GM10248 (cell line): ENCODE measurements at regions of chr12 and their contacts with region 1.

Region 1: GRCh38 chr12:4857472-4858291 is 52.0 kb upstream of the KCNA1 start:
- DNase-seq: peak; percentile 79
- CTCF ChIP-seq: peak; percentile 94

Region 2: DNA sequence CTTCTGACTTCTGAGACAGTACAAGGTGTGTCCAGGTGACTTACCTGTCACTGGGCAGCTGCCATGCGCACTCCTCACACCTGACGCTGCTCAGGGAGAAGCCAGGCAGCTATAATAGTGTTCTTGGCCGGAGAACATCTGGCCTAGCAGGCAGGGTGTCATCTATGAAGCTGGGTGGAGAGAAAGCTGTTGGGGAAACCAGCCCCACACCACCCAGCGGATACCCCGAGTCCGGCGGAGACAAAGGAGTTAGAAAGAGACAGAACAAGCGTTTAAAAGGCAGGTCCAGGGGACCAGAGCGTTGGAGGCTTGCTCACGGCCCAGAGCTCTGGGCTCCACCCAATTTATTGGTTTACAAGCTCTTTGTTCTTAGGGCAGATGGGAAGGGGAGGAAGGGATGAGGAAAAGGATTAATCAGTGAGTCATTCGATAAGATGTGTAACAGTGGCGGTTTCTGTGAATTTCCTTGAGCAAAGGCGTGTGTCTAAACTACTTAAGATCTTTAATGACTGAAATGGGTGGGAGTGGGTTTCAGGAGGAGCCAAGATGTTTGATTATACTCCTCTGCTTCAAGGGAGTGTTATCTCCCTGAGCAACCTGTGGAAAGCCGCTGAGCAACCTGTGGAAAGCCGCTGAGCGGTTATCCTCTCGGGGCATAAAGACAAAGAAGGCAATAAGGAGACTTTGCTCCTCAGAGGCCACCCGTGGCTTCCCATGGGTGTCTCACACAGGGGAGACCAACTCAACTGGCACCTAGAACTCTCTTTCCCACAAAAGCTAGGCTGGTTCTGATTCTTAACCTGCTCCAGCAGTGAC is 137.7 kb before region 1 on chr12 and contains the start of gene GALNT8:
- CTCF ChIA-PET with region 1: no interaction called
- POLR2A ChIA-PET with region 1: no interaction called
- DNase-seq: no peak
- CTCF ChIP-seq: no peak

Region 3: DNA sequence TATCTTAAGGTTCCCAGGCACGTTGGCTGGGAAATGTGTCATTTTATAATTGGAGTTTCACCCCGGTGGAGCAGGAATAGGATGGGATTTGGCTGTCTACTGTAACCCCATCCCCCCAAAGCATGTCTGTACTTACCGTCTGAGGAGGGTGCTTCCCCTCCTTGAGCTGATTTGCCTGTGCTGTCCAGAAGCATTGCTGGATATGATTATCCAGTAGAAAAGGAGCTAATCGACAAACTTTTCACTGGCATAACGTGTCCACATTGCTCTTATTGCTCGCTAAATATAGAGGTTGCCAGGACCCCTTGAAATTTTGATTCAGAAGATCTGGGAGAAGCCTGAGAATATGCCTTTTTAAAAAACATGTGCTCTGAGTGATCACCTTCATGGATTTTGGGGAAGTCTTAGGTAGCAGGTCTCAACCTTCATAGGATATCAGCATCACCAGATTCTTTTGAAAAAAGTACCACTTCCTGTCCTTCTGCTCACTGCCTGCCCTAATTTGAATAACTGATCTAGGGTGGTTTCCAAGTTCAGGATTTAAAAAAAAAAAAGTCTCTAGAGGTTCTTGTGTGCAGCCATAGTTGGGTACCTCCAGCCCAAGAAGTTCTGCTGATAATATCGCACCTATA is 28.4 kb before region 1 on chr12:
- CTCF ChIA-PET with region 1: interaction called, 45 read pairs
- POLR2A ChIA-PET with region 1: no interaction called
- DNase-seq: peak; percentile 76
- CTCF ChIP-seq: no peak

Region 4: DNA sequence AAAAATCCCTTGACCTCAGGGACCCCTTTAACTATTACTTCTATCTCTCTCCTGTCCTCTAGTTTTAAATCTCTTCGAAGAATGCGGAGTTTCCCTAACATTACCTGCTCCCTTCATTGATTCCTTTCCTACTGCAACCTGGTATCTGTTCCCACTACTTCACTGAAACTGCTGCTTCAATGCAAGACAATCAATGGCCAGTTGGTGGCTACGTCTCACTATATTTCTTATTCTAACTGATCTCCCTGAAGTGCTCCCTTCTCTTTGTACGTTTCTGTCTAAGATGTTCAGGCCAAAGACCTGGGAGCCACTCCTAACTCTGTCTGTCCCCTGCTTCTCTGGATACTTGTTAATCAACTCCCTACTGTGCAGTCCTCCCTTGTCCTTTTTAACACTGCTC is 41.7 kb after region 1 on chr12:
- CTCF ChIA-PET with region 1: interaction called, 13 read pairs
- POLR2A ChIA-PET with region 1: no interaction called
- DNase-seq: peak; percentile 20
- CTCF ChIP-seq: peak; percentile 51

Region 5: DNA sequence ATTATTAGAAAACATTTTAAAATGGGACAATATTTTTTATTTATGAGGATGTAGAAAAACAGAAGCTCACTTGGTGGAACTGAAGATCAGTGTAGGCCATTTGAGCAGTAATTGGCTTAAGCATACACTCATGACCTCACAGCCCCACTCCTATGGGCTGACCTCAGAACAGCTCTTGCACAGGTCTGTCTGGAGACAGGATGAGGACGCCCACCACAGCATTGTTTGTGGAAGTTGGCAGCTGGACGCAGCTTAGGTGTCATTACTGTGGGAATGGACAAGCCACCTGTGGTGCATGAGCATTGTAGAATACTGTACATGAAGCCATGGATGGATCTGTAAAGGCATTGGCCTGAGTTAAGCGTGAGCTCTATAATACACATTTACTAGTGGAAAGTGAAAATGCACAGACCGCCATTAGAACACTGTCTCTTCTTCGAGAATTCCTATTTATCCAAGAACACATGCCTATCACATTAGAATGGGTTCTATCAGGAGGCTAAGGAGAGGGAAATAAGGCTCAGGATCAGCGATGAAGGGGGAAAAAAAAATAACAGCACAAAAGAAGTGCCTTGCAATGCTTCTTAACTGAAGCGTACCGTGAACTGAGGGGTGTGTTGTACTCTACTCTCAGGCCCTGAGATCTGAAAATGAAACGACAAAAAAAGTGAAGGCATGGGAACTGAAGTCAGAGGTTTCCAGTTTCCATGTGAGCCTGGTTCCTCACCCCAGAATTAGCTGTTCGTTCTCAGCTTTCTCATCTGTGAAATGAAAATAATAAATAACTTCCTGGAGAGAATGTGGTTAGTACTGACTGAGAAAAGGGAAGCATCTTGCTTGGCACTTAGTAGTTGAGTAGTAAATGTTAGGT is 85.6 kb after region 1 on chr12:
- CTCF ChIA-PET with region 1: interaction called, 40 read pairs
- POLR2A ChIA-PET with region 1: no interaction called
- DNase-seq: peak; percentile 65
- CTCF ChIP-seq: no peak

Region 6: DNA sequence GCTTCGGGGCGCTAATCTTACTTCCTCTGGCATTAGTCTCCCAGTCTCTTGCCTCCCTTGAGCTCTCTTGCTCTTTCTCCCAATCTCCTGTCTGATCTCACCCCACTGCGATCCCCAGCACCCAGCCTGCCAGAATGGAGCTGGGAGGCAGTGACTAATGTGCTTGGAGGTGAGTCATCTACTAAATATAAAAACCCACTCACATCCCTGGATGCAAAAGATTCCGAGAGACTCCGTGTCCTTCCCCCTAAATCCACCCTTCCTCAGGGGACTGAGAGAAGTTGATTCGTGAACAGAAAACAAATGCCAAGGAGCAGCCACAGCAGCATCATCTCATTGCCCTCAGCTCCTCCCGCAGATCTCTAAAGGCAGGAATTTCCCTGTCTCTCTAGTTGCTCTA is 140.3 kb after region 1 on chr12:
- CTCF ChIA-PET with region 1: interaction called, 198 read pairs
- POLR2A ChIA-PET with region 1: no interaction called
- DNase-seq: no peak
- CTCF ChIP-seq: no peak

Region 7: GRCh38 chr12:5022465-5023061 is 164.9 kb after region 1 on chr12:
- CTCF ChIA-PET with region 1: interaction called, 17 read pairs
- POLR2A ChIA-PET with region 1: no interaction called
- DNase-seq: peak; percentile 84
- CTCF ChIP-seq: peak; percentile 95

Region 8: GRCh38 chr12:5166976-5167375 is 309.3 kb after region 1 on chr12:
- CTCF ChIA-PET with region 1: no interaction called
- POLR2A ChIA-PET with region 1: no interaction called
- DNase-seq: no peak
- CTCF ChIP-seq: no peak